GM12878 (cell line): ENCODE measurements at regions of chr18 and their contacts with region 1.

Region 1: GRCh38 chr18:56309104-56309503 is 329.3 kb downstream of the TXNL1 start:
- DNase-seq: no peak
- ATAC-seq: no peak
- H3K4me3 ChIP-seq: no peak overlapping the region
- H3K27ac ChIP-seq: no peak overlapping the region
- H3K4me1 ChIP-seq: no peaks in the 10 kb centered on the region
- H3K27me3 ChIP-seq: no peaks in the 10 kb centered on the region
- CTCF ChIP-seq: no peak
- EP300 ChIP-seq: no peak
- POLR2A ChIP-seq: no peak
- RAD21 ChIP-seq: no peak

Region 2: GRCh38 chr18:55289775-55290174 is 1019.3 kb before region 1 on chr18:
- CTCF ChIA-PET with region 1: no interaction called
- POLR2A ChIA-PET with region 1: no interaction called
- RAD21 ChIA-PET with region 1: no interaction called
- SMC1A ChIA-PET with region 1: no interaction called
- in situ Hi-C with region 1: no loop called
- intact Hi-C with region 1: no loop called
- DNase-seq: no peak
- ATAC-seq: peak; percentile 89
- H3K4me3 ChIP-seq: no peak overlapping the region
- H3K27ac ChIP-seq: no peak overlapping the region
- H3K4me1 ChIP-seq: 0 out of 2 replicates have a peak, but pooled peaks cover 3% of the 10 kb centered on the region
- H3K27me3 ChIP-seq: no peaks in the 10 kb centered on the region
- CTCF ChIP-seq: no peak
- EP300 ChIP-seq: peak in 1 of 2 experiments; percentile 34; a peak in 1 of 4 replicates
- POLR2A ChIP-seq: no peak
- RAD21 ChIP-seq: no peak

Region 3: GRCh38 chr18:56273541-56274219 is 35.4 kb before region 1 on chr18:
- CTCF ChIA-PET with region 1: no interaction called
- POLR2A ChIA-PET with region 1: no interaction called
- RAD21 ChIA-PET with region 1: no interaction called
- SMC1A ChIA-PET with region 1: no interaction called
- in situ Hi-C with region 1: no loop called
- intact Hi-C with region 1: no loop called
- DNase-seq: no peak
- ATAC-seq: no peak
- H3K4me3 ChIP-seq: no peak overlapping the region
- H3K27ac ChIP-seq: no peak overlapping the region
- H3K4me1 ChIP-seq: no peaks in the 10 kb centered on the region
- H3K27me3 ChIP-seq: no peaks in the 10 kb centered on the region
- CTCF ChIP-seq: no peak
- EP300 ChIP-seq: no peak
- POLR2A ChIP-seq: no peak
- RAD21 ChIP-seq: no peak

Region 4: DNA sequence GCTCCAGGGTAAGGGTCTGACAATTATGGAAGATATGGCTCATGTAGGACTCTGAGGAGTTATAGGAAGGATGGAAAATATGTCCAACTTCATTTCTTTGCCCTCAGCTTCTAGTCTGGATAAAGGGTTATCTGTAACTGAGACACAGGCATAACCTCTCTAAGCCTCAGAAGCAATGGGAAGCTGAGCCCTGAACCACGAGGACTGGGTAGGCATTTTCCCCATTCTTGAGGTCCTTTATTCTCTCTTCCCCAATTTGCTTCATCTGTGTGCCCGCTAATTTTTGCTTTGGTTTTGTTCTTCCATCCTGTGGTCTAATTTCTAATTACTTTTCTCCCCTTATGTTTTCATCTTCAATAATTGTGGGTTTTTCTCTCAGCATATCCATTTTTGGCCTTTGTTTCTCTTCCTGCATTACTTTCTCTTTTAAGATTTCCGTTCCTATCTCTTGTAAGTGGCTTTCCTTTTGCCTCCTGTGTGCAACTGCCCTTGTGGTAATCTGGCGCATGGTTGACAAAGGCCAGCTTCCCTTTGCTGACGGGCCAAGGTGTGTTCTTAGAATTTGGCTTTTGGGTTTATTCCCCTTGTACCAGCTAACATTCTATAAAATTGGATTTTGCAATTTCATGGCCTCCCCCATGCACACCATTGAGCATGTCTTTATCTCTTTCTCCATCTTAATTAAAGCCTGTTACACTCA is 14.5 kb before region 1 on chr18:
- CTCF ChIA-PET with region 1: interaction called, 7 read pairs
- POLR2A ChIA-PET with region 1: no interaction called
- RAD21 ChIA-PET with region 1: interaction called, 4 read pairs
- SMC1A ChIA-PET with region 1: interaction called, 17 read pairs
- in situ Hi-C with region 1: no loop called
- intact Hi-C with region 1: no loop called
- DNase-seq: no peak
- ATAC-seq: peak; percentile 27; the same call in 1 of the 3 replicates
- H3K4me3 ChIP-seq: no peak overlapping the region
- H3K27ac ChIP-seq: no peak overlapping the region
- H3K4me1 ChIP-seq: no peaks in the 10 kb centered on the region; the same call in 1 of the 2 replicates
- H3K27me3 ChIP-seq: no peaks in the 10 kb centered on the region
- CTCF ChIP-seq: no peak
- EP300 ChIP-seq: no peak
- POLR2A ChIP-seq: no peak
- RAD21 ChIP-seq: no peak